Stomach (tissue), 19 donors: ENCODE measurements at regions of chr4 and their contacts with region 1.

Region 1: DNA sequence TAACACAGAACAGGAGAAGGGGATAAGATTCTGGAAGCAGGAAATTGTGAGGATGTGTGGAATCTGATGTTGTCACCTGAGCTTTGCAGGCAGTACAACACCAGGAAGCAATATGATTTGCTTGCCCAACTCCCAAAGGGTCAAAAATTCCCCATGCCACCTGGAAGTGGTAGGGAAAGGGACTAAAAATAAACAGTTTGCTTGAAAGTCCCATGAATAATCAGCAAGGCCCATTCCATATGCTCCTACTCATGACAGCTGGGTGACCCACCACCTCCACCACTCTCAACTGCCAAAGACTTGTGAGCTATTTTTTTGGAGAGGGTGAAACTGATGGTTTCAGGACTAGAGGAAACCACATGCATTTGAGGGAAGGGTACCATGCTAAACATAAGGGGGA is 168.4 kb downstream of the KCNIP4 start:
- DNase-seq: no peak
- H3K4me3 ChIP-seq: no peak overlapping the region
- H3K27ac ChIP-seq: no peak overlapping the region
- H3K4me1 ChIP-seq: no peaks in the 10 kb centered on the region
- H3K27me3 ChIP-seq: no peaks in the 10 kb centered on the region
- CTCF ChIP-seq: no peak
- EP300 ChIP-seq: no peak
- POLR2A ChIP-seq: no peak

Region 2: GRCh38 chr4:20700007-20700761 is 1080.0 kb before region 1 on chr4 and contains the start of gene PACRGL:
- intact Hi-C with region 1: no loop called
- DNase-seq: peak; percentile 93 to 98
- H3K4me3 ChIP-seq: peak within 1 kb of the TSS; percentile 81 to 95 (median 88)
- H3K27ac ChIP-seq: peak within 1 kb of the TSS; percentile 78 to 88 (median 85)
- H3K4me1 ChIP-seq: peaks cover 17 to 24% (median 21%) of the 10 kb centered on the region in 4 donors
- H3K27me3 ChIP-seq: no peaks in the 10 kb centered on the region
- CTCF ChIP-seq: no peak
- EP300 ChIP-seq: no peak
- POLR2A ChIP-seq: peak in 1 of 4 donors; percentile 20
- total RNA-seq, gene PACRGL: 34.2 to 223 (median 40.3) TPM

Region 3: DNA sequence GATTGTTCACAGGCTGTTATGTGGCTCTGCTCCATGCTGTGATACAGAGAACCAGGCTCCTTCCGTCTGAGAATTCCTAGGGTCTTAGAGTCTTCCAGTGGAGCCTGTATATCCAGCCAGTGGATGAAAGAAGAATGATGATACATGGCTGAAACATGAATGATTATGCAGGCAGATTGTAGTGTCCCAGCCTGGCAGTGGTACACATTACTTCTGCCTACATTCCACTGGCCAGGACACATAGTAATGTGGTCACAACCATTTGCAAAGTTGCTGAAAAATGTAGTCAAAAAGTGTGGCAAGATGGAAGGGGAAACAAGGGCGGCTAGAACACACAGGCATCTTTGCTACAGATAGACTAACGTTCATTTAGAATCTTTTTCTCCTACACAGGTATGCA is 908.1 kb after region 1 on chr4:
- intact Hi-C with region 1: loop called (anchors 10 kb)
- DNase-seq: no peak
- H3K4me3 ChIP-seq: no peak overlapping the region
- H3K27ac ChIP-seq: no peak overlapping the region
- H3K4me1 ChIP-seq: peaks cover 0 to 5% (median 2%) of the 10 kb centered on the region in 4 donors
- H3K27me3 ChIP-seq: no peaks in the 10 kb centered on the region
- CTCF ChIP-seq: no peak
- EP300 ChIP-seq: no peak
- POLR2A ChIP-seq: no peak